ENCODE measurements at regions of chr10 and their contacts with region 1.

Region 1: GRCh38 chr10:47047671-47048525 is 136.7 kb downstream of the PTPN20 start:
- DNase-seq: peak; percentile 59 to 87 (median 75)
- ATAC-seq: peak in 3 of 4 donors; percentile 44 to 75 (median 60)
- H3K4me3 ChIP-seq: no peak overlapping the region
- H3K27ac ChIP-seq: no peak overlapping the region
- H3K4me1 ChIP-seq: peaks cover 0 to 24% (median 0%) of the 10 kb centered on the region in 12 donors
- H3K27me3 ChIP-seq: no peaks in the 10 kb centered on the region
- CTCF ChIP-seq: peak; percentile 68 to 89 (median 84)
- POLR2A ChIP-seq: no peak

Region 2: DNA sequence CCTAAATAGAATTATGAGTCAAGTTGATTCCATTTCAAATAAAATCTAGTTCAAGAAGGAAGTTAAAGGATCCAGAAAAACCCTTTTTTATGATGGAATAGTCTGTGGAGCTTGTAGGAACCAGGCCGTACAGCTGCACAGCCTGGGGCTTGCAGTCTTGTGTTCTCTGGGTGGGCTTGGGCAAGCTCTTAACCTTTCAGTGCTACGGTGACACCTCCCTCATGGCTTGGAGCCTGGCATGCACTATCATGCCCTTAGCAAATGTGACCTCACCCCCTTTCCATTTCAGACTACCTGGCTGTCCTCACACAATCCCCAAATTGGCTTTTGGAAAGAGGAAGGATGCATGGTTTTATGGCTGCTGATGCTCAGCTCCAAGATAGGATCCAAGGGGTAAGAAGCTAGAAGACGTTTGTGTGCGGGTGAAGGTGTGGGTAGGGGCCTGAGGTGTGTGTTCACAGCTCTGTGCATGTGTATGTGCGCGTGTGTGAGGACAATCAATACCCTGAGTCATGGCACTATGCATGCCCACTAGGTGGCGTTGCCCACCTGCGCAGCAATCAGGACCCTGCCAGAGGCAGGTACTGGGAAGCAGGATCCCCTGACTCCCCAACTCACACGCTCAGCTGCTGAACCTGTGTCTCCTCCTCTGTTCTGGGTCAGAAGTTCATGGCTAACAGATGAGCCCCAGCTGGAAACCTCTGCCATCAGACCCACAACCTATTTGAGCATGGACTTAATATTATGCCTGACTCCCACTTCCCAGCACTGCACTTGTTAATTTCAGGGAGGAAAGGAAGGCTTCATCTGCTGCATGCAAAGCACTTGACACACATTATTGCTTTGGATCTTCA is 23.3 kb before region 1 on chr10:
- intact Hi-C with region 1: loop called in 1 of 10 experiments (anchors 1 kb)
- DNase-seq: peak in 3 of 5 donors; percentile 51 to 69 (median 52)
- ATAC-seq: peak; percentile 33 to 72 (median 70)
- H3K4me3 ChIP-seq: no peak overlapping the region
- H3K27ac ChIP-seq: peak overlapping the region in 2 of 12 donors; percentile 14 to 30
- H3K4me1 ChIP-seq: peaks cover 0 to 9% (median 0%) of the 10 kb centered on the region in 12 donors
- H3K27me3 ChIP-seq: no peaks in the 10 kb centered on the region
- CTCF ChIP-seq: peak; percentile 61 to 84 (median 72)
- POLR2A ChIP-seq: no peak

Region 3: GRCh38 chr10:47311932-47312662 is 264.2 kb after region 1 on chr10:
- intact Hi-C with region 1: loop called (anchors 1 to 5 kb)
- DNase-seq: peak; percentile 78 to 91 (median 83)
- ATAC-seq: peak; percentile 80 to 97 (median 94)
- H3K4me3 ChIP-seq: no peak overlapping the region
- H3K27ac ChIP-seq: no peak overlapping the region
- H3K4me1 ChIP-seq: peaks cover 0 to 10% (median 4%) of the 10 kb centered on the region in 12 donors
- H3K27me3 ChIP-seq: peaks cover 0 to 7% (median 0%) of the 10 kb centered on the region in 9 donors
- CTCF ChIP-seq: peak; percentile 63 to 91 (median 81)
- POLR2A ChIP-seq: no peak

Region 4: GRCh38 chr10:47318706-47319105 is 270.8 kb after region 1 on chr10:
- intact Hi-C with region 1: loop called in 7 of 10 experiments (anchors 2 to 5 kb)
- DNase-seq: no peak
- ATAC-seq: no peak
- H3K4me3 ChIP-seq: no peak overlapping the region
- H3K27ac ChIP-seq: no peak overlapping the region
- H3K4me1 ChIP-seq: peaks cover 0 to 5% (median 0%) of the 10 kb centered on the region in 12 donors
- H3K27me3 ChIP-seq: peaks cover 0 to 16% (median 0%) of the 10 kb centered on the region in 9 donors
- CTCF ChIP-seq: no peak
- POLR2A ChIP-seq: no peak